H1 (cell line): ENCODE measurements at regions of chr7 and their contacts with region 1.

Region 1: DNA sequence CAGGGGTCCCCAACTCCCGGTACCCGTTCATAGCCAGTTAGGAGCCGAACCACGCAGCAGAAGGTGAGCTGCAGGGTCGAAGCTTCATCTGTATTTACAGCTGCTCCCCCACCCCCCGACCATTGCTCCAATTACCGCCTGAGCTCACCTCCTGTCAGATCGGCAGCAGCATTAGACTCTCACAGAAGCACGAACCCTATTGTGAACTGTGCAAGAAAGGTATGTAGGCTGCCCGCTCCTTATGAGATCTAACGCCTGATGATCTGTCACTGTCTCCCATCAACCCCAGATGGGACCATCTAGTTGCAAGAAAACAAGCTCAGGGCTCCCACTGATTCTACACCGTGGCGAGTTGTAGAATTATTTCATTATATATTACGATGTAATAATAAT is 14.6 kb upstream of the AZGP1 start:
- DNase-seq: no peak
- H3K4me3 ChIP-seq: peak overlapping the region in 3 of 4 experiments; percentile 31 to 50 (median 38); a peak in 6 of 8 replicates
- H3K27ac ChIP-seq: no peak overlapping the region
- H3K4me1 ChIP-seq: peaks cover 0 to 4% (median 2%) of the 10 kb centered on the region in 4 experiments; a peak in 3 of 7 replicates
- H3K27me3 ChIP-seq: no peaks in the 10 kb centered on the region; a peak in 1 of 7 replicates
- CTCF ChIP-seq: no peak
- EP300 ChIP-seq: no peak
- POLR2A ChIP-seq: no peak
- RAD21 ChIP-seq: no peak

Region 2: GRCh38 chr7:99308471-99309074 is 681.9 kb before region 1 on chr7:
- CTCF ChIA-PET with region 1: no interaction called
- POLR2A ChIA-PET with region 1: no interaction called
- DNase-seq: no peak
- H3K4me3 ChIP-seq: no peak overlapping the region
- H3K27ac ChIP-seq: no peak overlapping the region
- H3K4me1 ChIP-seq: no peaks in the 10 kb centered on the region
- H3K27me3 ChIP-seq: no peaks in the 10 kb centered on the region
- CTCF ChIP-seq: no peak
- EP300 ChIP-seq: no peak
- POLR2A ChIP-seq: no peak
- RAD21 ChIP-seq: no peak

Region 3: GRCh38 chr7:99631295-99632109 is 359.0 kb before region 1 on chr7:
- CTCF ChIA-PET with region 1: interaction called, 10 read pairs
- POLR2A ChIA-PET with region 1: no interaction called
- DNase-seq: peak in 1 of 2 experiments; percentile 41
- H3K4me3 ChIP-seq: no peak overlapping the region
- H3K27ac ChIP-seq: no peak overlapping the region
- H3K4me1 ChIP-seq: peaks cover 10 to 26% (median 18%) of the 10 kb centered on the region in 4 experiments
- H3K27me3 ChIP-seq: no peaks in the 10 kb centered on the region
- CTCF ChIP-seq: peak; percentile 49 to 65 (median 53)
- EP300 ChIP-seq: peak in 1 of 2 experiments; percentile 67; a peak in 1 of 3 replicates
- POLR2A ChIP-seq: no peak
- RAD21 ChIP-seq: peak; percentile 82 to 84

Region 4: GRCh38 chr7:99918959-99919813 is 71.3 kb before region 1 on chr7 and contains the start of gene TRIM4:
- CTCF ChIA-PET with region 1: interaction called, 241 read pairs
- POLR2A ChIA-PET with region 1: interaction called, 7 read pairs
- DNase-seq: peak in 1 of 2 experiments; percentile 68
- H3K4me3 ChIP-seq: peak within 1 kb of the TSS in 1 of 4 experiments; percentile 26; a peak in 2 of 8 replicates
- H3K27ac ChIP-seq: no peak within 1 kb of the TSS
- H3K4me1 ChIP-seq: no peaks in the 10 kb centered on the region
- H3K27me3 ChIP-seq: no peaks in the 10 kb centered on the region
- CTCF ChIP-seq: no peak
- EP300 ChIP-seq: no peak
- POLR2A ChIP-seq: no peak
- RAD21 ChIP-seq: no peak
- total RNA-seq, gene TRIM4: 6.6 and 7.3 TPM in 2 replicates

Region 5: GRCh38 chr7:99949638-99950228 is 40.7 kb before region 1 on chr7:
- CTCF ChIA-PET with region 1: interaction called, 15 read pairs
- POLR2A ChIA-PET with region 1: interaction called, 4 read pairs
- DNase-seq: no peak
- H3K4me3 ChIP-seq: no peak overlapping the region
- H3K27ac ChIP-seq: no peak overlapping the region
- H3K4me1 ChIP-seq: peaks cover 4 to 6% (median 5%) of the 10 kb centered on the region in 4 experiments; a peak in 5 of 7 replicates
- H3K27me3 ChIP-seq: no peaks in the 10 kb centered on the region
- CTCF ChIP-seq: peak in 2 of 3 experiments; percentile 35 to 49; a peak in 2 of 4 replicates
- EP300 ChIP-seq: no peak
- POLR2A ChIP-seq: no peak
- RAD21 ChIP-seq: peak; percentile 48 to 58

Region 6: GRCh38 chr7:100003711-100004661 is 13.5 kb after region 1 on chr7:
- CTCF ChIA-PET with region 1: interaction called, 99 read pairs
- POLR2A ChIA-PET with region 1: interaction called, 4 read pairs
- DNase-seq: no peak
- H3K4me3 ChIP-seq: no peak overlapping the region
- H3K27ac ChIP-seq: no peak overlapping the region
- H3K4me1 ChIP-seq: peaks cover 0 to 2% (median 0%) of the 10 kb centered on the region in 4 experiments; a peak in 2 of 7 replicates
- H3K27me3 ChIP-seq: no peaks in the 10 kb centered on the region
- CTCF ChIP-seq: no peak
- EP300 ChIP-seq: no peak
- POLR2A ChIP-seq: no peak
- RAD21 ChIP-seq: no peak